Activated naive CD4-positive, alpha-beta T cell treated with anti-CD3 and anti-CD28 coated beads for 36 hours (primary cell): ENCODE measurements at regions of chr19 and their contacts with region 1.

Region 1: GRCh38 chr19:3599776-3600183 is 6.9 kb downstream of the TBXA2R start:
- DNase-seq: no peak
- H3K4me3 Mint-ChIP-seq: no peak overlapping the region
- H3K27ac Mint-ChIP-seq: no peak overlapping the region
- H3K4me1 Mint-ChIP-seq: no peaks in the 10 kb centered on the region
- H3K27me3 Mint-ChIP-seq: no peaks in the 10 kb centered on the region

Region 2: GRCh38 chr19:3609779-3610719 is 10.3 kb after region 1 on chr19:
- CTCF ChIA-PET with region 1: no interaction called
- intact Hi-C with region 1: loop called (anchors 1 kb)
- DNase-seq: no peak
- H3K4me3 Mint-ChIP-seq: no peak overlapping the region
- H3K27ac Mint-ChIP-seq: no peak overlapping the region
- H3K4me1 Mint-ChIP-seq: peaks cover 10% of the 10 kb centered on the region
- H3K27me3 Mint-ChIP-seq: no peaks in the 10 kb centered on the region